IMR-90 (cell line): ENCODE measurements at regions of chr1 and their contacts with region 1.

Region 1: GRCh38 chr1:168466092-168466713 is 77.6 kb downstream of the XCL2 start:
- DNase-seq: peak; percentile 46
- ATAC-seq: no peak
- H3K4me3 ChIP-seq: no peak overlapping the region
- H3K27ac ChIP-seq: no peak overlapping the region
- H3K4me1 ChIP-seq: peaks cover 2% of the 10 kb centered on the region
- H3K27me3 ChIP-seq: no peaks in the 10 kb centered on the region
- CTCF ChIP-seq: no peak
- POLR2A ChIP-seq: no peak
- RAD21 ChIP-seq: no peak

Region 2: DNA sequence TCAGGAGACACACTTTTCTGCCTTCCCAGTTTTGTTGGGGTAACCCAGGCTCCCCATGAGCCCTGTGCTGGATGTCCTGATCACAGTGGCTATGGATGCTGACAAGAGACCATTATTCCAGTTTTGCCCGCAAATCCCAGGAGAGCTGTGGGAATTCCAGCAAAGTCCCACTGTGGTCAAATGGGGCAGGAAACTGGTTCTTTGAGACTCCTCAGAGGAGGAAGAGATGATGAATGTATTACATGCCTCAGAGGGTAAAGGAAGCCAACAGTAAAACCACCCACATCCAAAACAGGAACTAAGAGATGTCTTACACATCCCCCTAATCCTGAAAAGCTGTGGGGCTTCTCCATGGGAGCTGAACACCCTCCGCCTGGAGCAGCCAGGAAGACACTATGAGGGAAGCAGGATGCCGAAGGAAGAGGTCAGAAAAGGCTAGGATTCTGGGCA is 757.2 kb before region 1 on chr1:
- CTCF ChIA-PET with region 1: no interaction called
- POLR2A ChIA-PET with region 1: no interaction called
- dilution Hi-C with region 1: no loop called
- in situ Hi-C with region 1: no loop called
- intact Hi-C with region 1: loop called (anchors 5 kb)
- DNase-seq: no peak
- ATAC-seq: no peak
- H3K4me3 ChIP-seq: no peak overlapping the region
- H3K27ac ChIP-seq: no peak overlapping the region
- H3K4me1 ChIP-seq: no peaks in the 10 kb centered on the region
- H3K27me3 ChIP-seq: peaks cover 29% of the 10 kb centered on the region
- CTCF ChIP-seq: no peak
- POLR2A ChIP-seq: no peak
- RAD21 ChIP-seq: no peak

Region 3: DNA sequence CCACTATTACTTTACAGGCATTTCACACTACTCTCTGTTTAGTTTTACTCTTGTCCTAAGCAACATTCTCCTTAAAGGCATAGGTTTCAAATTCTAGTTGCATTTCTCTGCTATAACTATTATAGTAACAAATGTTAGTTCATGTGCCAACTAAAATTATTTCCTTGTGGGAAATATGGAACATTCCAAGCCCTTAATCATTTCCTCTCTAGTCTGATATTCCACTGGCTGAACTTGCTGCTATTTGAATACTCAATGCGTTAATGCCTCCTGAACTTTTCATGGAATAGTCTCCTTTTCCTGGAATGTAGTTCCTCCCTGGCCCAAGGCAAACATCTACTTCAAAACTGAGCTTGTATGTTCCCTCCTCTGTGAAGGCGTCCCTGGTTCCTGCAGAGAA is 204.8 kb before region 1 on chr1:
- CTCF ChIA-PET with region 1: no interaction called
- POLR2A ChIA-PET with region 1: no interaction called
- dilution Hi-C with region 1: no loop called
- in situ Hi-C with region 1: no loop called
- intact Hi-C with region 1: no loop called
- DNase-seq: peak; percentile 65
- ATAC-seq: peak; percentile 79
- H3K4me3 ChIP-seq: no peak overlapping the region
- H3K27ac ChIP-seq: no peak overlapping the region
- H3K4me1 ChIP-seq: peaks cover 3% of the 10 kb centered on the region
- H3K27me3 ChIP-seq: no peaks in the 10 kb centered on the region
- CTCF ChIP-seq: no peak
- POLR2A ChIP-seq: no peak
- RAD21 ChIP-seq: no peak

Region 4: GRCh38 chr1:168365719-168366479 is 100.3 kb before region 1 on chr1:
- CTCF ChIA-PET with region 1: no interaction called
- POLR2A ChIA-PET with region 1: no interaction called
- dilution Hi-C with region 1: no loop called
- in situ Hi-C with region 1: no loop called
- intact Hi-C with region 1: no loop called
- DNase-seq: no peak
- ATAC-seq: no peak
- H3K4me3 ChIP-seq: no peak overlapping the region
- H3K27ac ChIP-seq: no peak overlapping the region
- H3K4me1 ChIP-seq: no peaks in the 10 kb centered on the region
- H3K27me3 ChIP-seq: no peaks in the 10 kb centered on the region; the same call in 1 of the 2 replicates
- CTCF ChIP-seq: no peak
- POLR2A ChIP-seq: no peak
- RAD21 ChIP-seq: no peak

Region 5: GRCh38 chr1:168498159-168498631 is 32.0 kb after region 1 on chr1:
- CTCF ChIA-PET with region 1: interaction called, 4 read pairs
- POLR2A ChIA-PET with region 1: no interaction called
- dilution Hi-C with region 1: no loop called
- in situ Hi-C with region 1: no loop called
- intact Hi-C with region 1: loop called (anchors 2 kb)
- DNase-seq: peak; percentile 56
- ATAC-seq: peak; percentile 50
- H3K4me3 ChIP-seq: no peak overlapping the region
- H3K27ac ChIP-seq: peak overlapping the region; percentile 62; the same call in 1 of the 2 replicates
- H3K4me1 ChIP-seq: peaks cover 4% of the 10 kb centered on the region; the same call in 1 of the 2 replicates
- H3K27me3 ChIP-seq: no peaks in the 10 kb centered on the region
- CTCF ChIP-seq: no peak
- POLR2A ChIP-seq: no peak
- RAD21 ChIP-seq: no peak